GM13977 (cell line): ENCODE measurements at regions of chr12 and their contacts with region 1.

Region 1: DNA sequence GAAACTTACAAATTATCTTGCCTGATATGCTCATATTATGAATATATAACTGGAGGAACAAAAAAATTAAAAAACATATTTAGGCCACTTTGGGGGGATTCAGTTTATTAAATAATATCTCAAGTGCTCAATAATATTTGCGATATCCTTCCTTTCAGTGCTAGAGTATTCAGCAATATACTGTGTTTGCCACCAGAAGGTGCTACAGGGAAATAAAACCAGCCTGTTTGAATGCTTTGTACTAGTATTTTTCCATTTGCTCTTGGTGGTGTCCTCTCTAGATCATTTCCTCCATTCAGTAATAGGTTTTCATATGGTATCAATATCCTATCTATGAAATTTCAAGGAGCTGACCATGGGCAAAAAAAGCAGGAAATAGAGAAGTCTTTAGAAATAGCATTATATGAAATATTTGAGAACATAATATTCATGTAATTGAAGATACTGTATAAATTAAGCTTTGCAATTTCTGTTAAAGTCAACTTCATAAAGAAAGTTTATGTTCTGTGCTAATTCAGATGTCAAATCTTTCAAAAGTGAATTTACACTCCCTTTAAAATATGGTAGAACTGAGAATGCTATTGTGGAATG is 106.2 kb upstream of the NAV3 start:
- DNase-seq: no peak
- CTCF ChIP-seq: peak; percentile 76

Region 2: DNA sequence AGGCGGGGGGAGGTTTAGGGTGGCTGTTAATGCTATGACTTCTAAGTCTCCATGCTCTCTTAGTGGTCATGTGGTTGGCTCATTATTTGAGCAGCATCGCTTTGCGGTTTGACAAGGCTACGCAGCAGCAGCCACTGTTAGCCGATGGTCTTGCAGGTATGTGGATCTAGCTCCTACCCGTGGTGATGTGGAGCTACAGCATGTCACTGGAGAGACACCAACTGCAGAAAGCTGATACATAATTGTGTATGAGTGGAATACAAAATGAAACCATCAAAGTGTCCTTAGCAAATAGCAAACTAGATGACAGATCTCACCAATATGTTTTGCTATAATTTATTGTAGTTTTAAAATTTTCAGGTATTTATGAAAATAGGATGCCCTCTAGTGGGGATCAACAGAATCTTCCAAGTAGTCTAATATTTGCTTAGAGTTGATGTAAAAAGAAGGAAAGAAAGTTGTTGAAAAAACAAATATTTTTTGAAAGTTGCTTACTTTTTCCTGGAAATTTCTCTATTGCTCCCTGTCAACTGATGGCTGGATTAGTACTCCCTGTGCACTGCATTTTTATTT is 201.2 kb after region 1 on chr12:
- in situ Hi-C with region 1: loop called (anchors 10 kb)
- DNase-seq: peak; percentile 55
- CTCF ChIP-seq: peak; percentile 90